CD14-positive monocyte (primary cell): ENCODE measurements at regions of chr6 and their contacts with region 1.

Region 1: GRCh38 chr6:88982720-88983119 is 19.3 kb upstream of the RNGTT start:
- DNase-seq: peak; percentile 65 to 84 (median 78)
- H3K4me3 ChIP-seq: no peak overlapping the region
- H3K4me3 Mint-ChIP-seq: no peak overlapping the region
- H3K27ac ChIP-seq: no peak overlapping the region
- H3K27ac Mint-ChIP-seq: no peak overlapping the region
- H3K4me1 ChIP-seq: peaks cover 0 to 3% of the 10 kb centered on the region in 2 donors
- H3K4me1 Mint-ChIP-seq: peaks cover 3% of the 10 kb centered on the region
- H3K27me3 ChIP-seq: no peaks in the 10 kb centered on the region
- H3K27me3 Mint-ChIP-seq: no peaks in the 10 kb centered on the region
- CTCF ChIP-seq: peak; percentile 72

Region 2: GRCh38 chr6:89145787-89146646 is 163.3 kb after region 1 on chr6 and contains the start of gene PM20D2:
- intact Hi-C with region 1: loop called in 1 of 2 experiments (anchors 5 kb)
- DNase-seq: peak in 2 of 3 donors; percentile 21 to 35
- H3K4me3 ChIP-seq: peak within 1 kb of the TSS; percentile 33 to 77 (median 72)
- H3K4me3 Mint-ChIP-seq: peak within 1 kb of the TSS; percentile 83 to 90
- H3K27ac ChIP-seq: peak within 1 kb of the TSS in 1 of 2 donors; percentile 3
- H3K27ac Mint-ChIP-seq: peak within 1 kb of the TSS in 5 of 7 donors; percentile 45 to 73 (median 61)
- H3K4me1 ChIP-seq: peaks cover 8 to 21% of the 10 kb centered on the region in 2 donors
- H3K4me1 Mint-ChIP-seq: peaks cover 13% of the 10 kb centered on the region
- H3K27me3 ChIP-seq: no peaks in the 10 kb centered on the region
- H3K27me3 Mint-ChIP-seq: no peaks in the 10 kb centered on the region
- CTCF ChIP-seq: no peak
- polyA plus RNA-seq, gene PM20D2: 1.2 to 2.1 (median 1.4) TPM

Region 3: DNA sequence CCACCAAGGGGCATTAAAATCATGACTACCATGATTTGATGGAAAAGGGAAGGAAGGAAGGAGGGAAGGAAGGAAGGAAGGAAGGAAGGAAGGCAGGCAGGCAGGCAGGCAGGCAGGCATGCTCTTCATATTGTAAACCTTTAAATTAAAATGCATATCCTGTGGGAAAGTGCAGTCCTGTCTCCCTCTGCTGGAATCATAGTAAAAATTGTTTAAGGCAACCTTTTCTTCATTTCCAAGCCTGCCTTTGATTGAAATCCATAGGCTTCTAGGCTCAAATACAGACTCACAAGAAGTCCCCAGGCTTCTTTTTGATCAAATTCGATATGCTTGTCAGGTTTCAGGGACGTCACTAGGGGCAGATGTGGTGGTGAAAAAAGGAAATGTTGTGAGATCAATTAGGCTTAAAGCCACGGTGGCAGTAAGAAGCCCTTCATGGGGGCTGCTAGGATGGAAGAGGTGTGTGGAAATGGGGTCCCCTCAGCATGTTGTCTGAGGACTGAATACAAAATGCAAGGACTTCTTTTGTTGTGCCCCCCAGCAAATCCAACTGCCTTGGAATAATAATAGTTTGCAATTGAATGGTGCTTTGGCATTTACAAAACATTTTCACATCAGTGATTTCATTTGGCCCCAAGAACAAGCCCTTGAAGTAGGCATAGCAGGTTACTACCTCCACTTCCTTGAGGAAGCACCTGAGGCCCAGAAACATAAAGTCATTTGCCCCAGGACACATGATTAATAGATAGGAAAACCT is 260.0 kb after region 1 on chr6:
- intact Hi-C with region 1: loop called (anchors 5 kb)
- DNase-seq: peak in 2 of 3 donors; percentile 29 to 34
- H3K4me3 ChIP-seq: no peak overlapping the region
- H3K4me3 Mint-ChIP-seq: no peak overlapping the region
- H3K27ac ChIP-seq: no peak overlapping the region
- H3K27ac Mint-ChIP-seq: no peak overlapping the region
- H3K4me1 ChIP-seq: peaks cover 0 to 5% of the 10 kb centered on the region in 2 donors
- H3K4me1 Mint-ChIP-seq: peaks cover 13% of the 10 kb centered on the region
- H3K27me3 ChIP-seq: no peaks in the 10 kb centered on the region
- H3K27me3 Mint-ChIP-seq: no peaks in the 10 kb centered on the region
- CTCF ChIP-seq: peak; percentile 55